H1 (cell line): ENCODE measurements at regions of chr4 and their contacts with region 1.

Region 1: GRCh38 chr4:77433418-77433733 is 172.2 kb upstream of the CXCL13 start:
- DNase-seq: no peak
- H3K4me3 ChIP-seq: no peak overlapping the region
- H3K27ac ChIP-seq: no peak overlapping the region
- H3K4me1 ChIP-seq: peaks cover 0 to 3% (median 0%) of the 10 kb centered on the region in 4 experiments; a peak in 1 of 7 replicates
- H3K27me3 ChIP-seq: no peaks in the 10 kb centered on the region; a peak in 1 of 7 replicates
- CTCF ChIP-seq: peak in 2 of 3 experiments; percentile 64 to 87; a peak in 3 of 4 replicates
- EP300 ChIP-seq: no peak
- POLR2A ChIP-seq: no peak
- RAD21 ChIP-seq: peak; percentile 79 to 89

Region 2: DNA sequence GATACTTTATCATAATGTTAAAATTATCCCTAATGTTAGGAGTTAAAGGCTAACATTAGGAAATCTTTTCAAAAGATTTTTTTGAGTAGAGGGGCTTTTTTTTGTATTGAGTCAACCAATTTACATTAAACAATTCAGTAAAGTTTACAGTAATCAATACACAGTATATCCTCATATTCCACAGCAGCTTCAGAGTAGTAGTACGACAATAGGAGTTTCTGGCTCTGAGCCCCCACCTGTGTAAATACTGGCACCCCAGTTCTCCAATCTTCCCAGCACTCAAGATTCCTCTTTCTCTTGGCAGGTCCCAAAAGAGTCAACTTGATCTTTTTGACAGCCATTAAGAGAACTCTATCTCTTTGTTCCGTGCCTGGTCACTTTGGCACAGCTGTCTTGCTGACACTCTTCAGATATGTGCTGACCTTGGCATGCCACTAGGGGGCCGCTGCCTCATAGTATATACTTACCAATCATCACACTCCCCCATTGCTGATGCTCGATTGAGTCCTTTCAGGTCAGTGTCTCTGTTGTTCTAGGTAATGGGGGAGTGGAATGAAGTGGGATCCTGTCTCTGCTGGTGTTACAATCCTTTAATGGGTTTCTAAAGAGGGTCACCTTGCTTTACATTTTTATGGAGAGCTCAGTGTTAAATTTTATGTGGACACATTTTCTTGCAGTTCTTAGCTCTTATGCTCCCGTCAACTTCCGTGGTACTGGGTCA is 338.1 kb before region 1 on chr4:
- CTCF ChIA-PET with region 1: no interaction called
- POLR2A ChIA-PET with region 1: no interaction called
- DNase-seq: peak; percentile 38 to 79
- H3K4me3 ChIP-seq: no peak overlapping the region
- H3K27ac ChIP-seq: no peak overlapping the region
- H3K4me1 ChIP-seq: no peaks in the 10 kb centered on the region
- H3K27me3 ChIP-seq: no peaks in the 10 kb centered on the region
- CTCF ChIP-seq: peak; percentile 70 to 94 (median 76)
- EP300 ChIP-seq: no peak
- POLR2A ChIP-seq: no peak
- RAD21 ChIP-seq: peak; percentile 75 to 80

Region 3: DNA sequence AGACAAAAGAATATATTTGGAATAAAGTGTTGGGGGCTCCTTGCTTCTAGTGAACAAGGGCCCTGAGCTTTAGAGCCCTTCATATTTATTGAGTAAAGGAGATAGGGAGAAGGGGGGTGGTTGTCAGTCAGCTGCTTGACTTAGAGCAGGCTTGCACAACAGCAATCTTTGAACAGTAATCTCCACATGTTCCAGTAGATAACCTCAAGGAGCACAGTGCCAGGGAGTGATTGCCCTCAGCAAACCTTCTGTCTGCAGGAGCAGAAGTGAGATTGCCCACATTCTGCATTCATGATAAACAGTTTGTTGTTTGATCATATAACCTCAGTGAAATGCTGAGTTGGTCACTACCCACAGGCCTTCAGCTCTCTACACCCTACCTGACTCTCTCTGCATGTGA is 33.5 kb before region 1 on chr4:
- CTCF ChIA-PET with region 1: interaction called, 1,551 read pairs
- POLR2A ChIA-PET with region 1: no interaction called
- DNase-seq: no peak
- H3K4me3 ChIP-seq: no peak overlapping the region
- H3K27ac ChIP-seq: no peak overlapping the region
- H3K4me1 ChIP-seq: peaks cover 0 to 4% (median 0%) of the 10 kb centered on the region in 4 experiments; a peak in 1 of 7 replicates
- H3K27me3 ChIP-seq: no peaks in the 10 kb centered on the region
- CTCF ChIP-seq: no peak
- EP300 ChIP-seq: no peak
- POLR2A ChIP-seq: no peak
- RAD21 ChIP-seq: no peak

Region 4: DNA sequence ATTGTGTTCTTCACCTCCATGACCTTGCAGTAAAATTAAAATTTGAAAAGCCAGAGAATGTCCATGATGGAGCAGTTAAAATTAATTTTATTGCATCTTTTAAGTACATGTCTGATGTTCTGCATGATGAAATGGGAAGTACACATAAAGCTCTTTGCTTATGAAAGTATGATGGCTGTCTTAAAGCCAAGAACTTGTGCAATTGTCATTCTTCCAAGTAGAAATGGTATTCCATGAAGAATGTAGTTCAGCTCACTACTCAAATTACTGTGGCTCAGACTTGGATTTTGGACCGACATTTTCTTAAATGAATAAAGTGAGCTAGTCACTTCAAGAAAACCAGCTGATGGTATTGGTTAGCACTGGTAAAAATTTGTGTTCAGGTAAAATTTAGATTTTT is 10.6 kb after region 1 on chr4:
- CTCF ChIA-PET with region 1: interaction called, 120 read pairs
- POLR2A ChIA-PET with region 1: no interaction called
- DNase-seq: no peak
- H3K4me3 ChIP-seq: no peak overlapping the region
- H3K27ac ChIP-seq: no peak overlapping the region
- H3K4me1 ChIP-seq: no peaks in the 10 kb centered on the region
- H3K27me3 ChIP-seq: no peaks in the 10 kb centered on the region
- CTCF ChIP-seq: no peak
- EP300 ChIP-seq: no peak
- POLR2A ChIP-seq: no peak
- RAD21 ChIP-seq: no peak

Region 5: DNA sequence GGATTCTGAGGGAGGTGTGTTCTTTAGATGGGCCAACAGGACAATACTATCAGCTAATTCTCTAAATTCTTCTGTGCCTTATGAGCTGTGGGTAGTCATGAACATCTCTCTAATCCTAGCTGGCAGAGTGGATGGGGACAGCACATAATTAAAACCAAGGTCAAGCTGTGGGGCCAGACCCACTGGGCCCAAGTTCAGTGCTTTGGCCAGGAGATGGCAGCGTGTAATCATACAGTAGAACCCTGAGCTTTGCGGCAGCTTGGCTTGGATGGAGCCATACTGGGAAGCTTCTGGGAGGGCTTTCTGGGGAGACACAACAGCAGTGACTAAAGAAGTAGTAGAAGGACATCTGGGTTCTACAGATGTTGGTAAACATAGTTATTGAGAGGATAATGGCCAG is 31.9 kb after region 1 on chr4:
- CTCF ChIA-PET with region 1: interaction called, 70 read pairs
- POLR2A ChIA-PET with region 1: no interaction called
- DNase-seq: peak in 1 of 2 experiments; percentile 49
- H3K4me3 ChIP-seq: no peak overlapping the region
- H3K27ac ChIP-seq: no peak overlapping the region
- H3K4me1 ChIP-seq: no peaks in the 10 kb centered on the region
- H3K27me3 ChIP-seq: no peaks in the 10 kb centered on the region
- CTCF ChIP-seq: peak; percentile 59 to 71 (median 65)
- EP300 ChIP-seq: no peak
- POLR2A ChIP-seq: no peak
- RAD21 ChIP-seq: peak; percentile 77 to 83

Region 6: GRCh38 chr4:77481856-77482255 is 48.5 kb after region 1 on chr4:
- CTCF ChIA-PET with region 1: no interaction called
- POLR2A ChIA-PET with region 1: no interaction called
- DNase-seq: no peak
- H3K4me3 ChIP-seq: no peak overlapping the region
- H3K27ac ChIP-seq: no peak overlapping the region
- H3K4me1 ChIP-seq: no peaks in the 10 kb centered on the region
- H3K27me3 ChIP-seq: no peaks in the 10 kb centered on the region
- CTCF ChIP-seq: no peak
- EP300 ChIP-seq: no peak
- POLR2A ChIP-seq: no peak
- RAD21 ChIP-seq: no peak